Naive thymus-derived CD4-positive, alpha-beta T cell (primary cell): ENCODE measurements at regions of chr4 and their contacts with region 1.

Region 1: DNA sequence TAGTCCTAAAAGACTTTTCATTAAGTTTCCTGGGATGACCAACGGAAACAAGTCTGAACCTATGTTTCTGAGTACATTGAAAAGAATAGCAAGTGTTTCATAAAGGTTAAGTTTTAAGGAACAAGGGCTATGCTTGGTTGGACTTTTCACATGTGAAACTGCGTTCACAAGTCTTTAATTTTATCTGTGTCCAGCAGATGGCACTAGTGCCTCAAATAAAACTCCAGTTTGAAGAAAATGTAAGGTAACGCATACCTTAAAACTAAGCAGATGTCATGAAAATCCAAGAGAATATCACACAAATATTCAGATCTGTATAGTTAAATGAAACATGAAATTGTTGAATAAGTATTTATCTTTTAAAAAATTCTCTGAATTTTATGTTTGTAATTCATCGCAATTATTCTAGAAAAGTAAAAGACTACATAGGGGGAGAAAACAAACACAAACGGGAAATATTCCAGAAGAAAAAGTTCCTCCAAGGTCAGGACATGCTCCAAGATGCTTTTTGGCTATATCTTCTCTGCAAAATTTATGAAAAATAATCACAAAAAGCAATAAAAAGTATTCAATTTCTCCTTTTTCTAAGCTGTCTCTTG is 89.6 kb upstream of the MAD2L1 start:
- DNase-seq: peak in 7 of 9 donors; percentile 22 to 63 (median 57)
- ATAC-seq: peak; percentile 63
- H3K4me3 ChIP-seq: no peak overlapping the region
- H3K4me3 Mint-ChIP-seq: no peak overlapping the region
- H3K27ac ChIP-seq: no peak overlapping the region
- H3K27ac Mint-ChIP-seq: no peak overlapping the region
- H3K4me1 ChIP-seq: no peaks in the 10 kb centered on the region
- H3K4me1 Mint-ChIP-seq: no peaks in the 10 kb centered on the region
- H3K27me3 ChIP-seq: no peaks in the 10 kb centered on the region
- H3K27me3 Mint-ChIP-seq: peaks cover 0 to 4% (median 0%) of the 10 kb centered on the region in 5 donors

Region 2: GRCh38 chr4:119707336-119707735 is 448.9 kb before region 1 on chr4:
- CTCF ChIA-PET with region 1: no interaction called
- POLR2A ChIA-PET with region 1: no interaction called
- intact Hi-C with region 1: no loop called
- DNase-seq: no peak
- ATAC-seq: no peak
- H3K4me3 ChIP-seq: no peak overlapping the region
- H3K4me3 Mint-ChIP-seq: no peak overlapping the region
- H3K27ac ChIP-seq: no peak overlapping the region
- H3K27ac Mint-ChIP-seq: no peak overlapping the region
- H3K4me1 ChIP-seq: no peaks in the 10 kb centered on the region
- H3K4me1 Mint-ChIP-seq: peaks cover 0 to 4% (median 0%) of the 10 kb centered on the region in 7 donors
- H3K27me3 ChIP-seq: no peaks in the 10 kb centered on the region
- H3K27me3 Mint-ChIP-seq: peaks cover 0 to 28% (median 25%) of the 10 kb centered on the region in 5 donors

Region 3: GRCh38 chr4:120718979-120719566 is 562.9 kb after region 1 on chr4:
- CTCF ChIA-PET with region 1: interaction called, 4 read pairs
- POLR2A ChIA-PET with region 1: no interaction called
- intact Hi-C with region 1: loop called in 1 of 2 experiments (anchors 5 kb)
- DNase-seq: peak in 6 of 9 donors; percentile 6 to 40 (median 36)
- ATAC-seq: peak; percentile 82
- H3K4me3 ChIP-seq: no peak overlapping the region
- H3K4me3 Mint-ChIP-seq: no peak overlapping the region
- H3K27ac ChIP-seq: no peak overlapping the region
- H3K27ac Mint-ChIP-seq: no peak overlapping the region
- H3K4me1 ChIP-seq: no peaks in the 10 kb centered on the region
- H3K4me1 Mint-ChIP-seq: peaks cover 0 to 2% (median 0%) of the 10 kb centered on the region in 7 donors
- H3K27me3 ChIP-seq: no peaks in the 10 kb centered on the region
- H3K27me3 Mint-ChIP-seq: peaks cover 0 to 16% (median 0%) of the 10 kb centered on the region in 5 donors

Region 4: DNA sequence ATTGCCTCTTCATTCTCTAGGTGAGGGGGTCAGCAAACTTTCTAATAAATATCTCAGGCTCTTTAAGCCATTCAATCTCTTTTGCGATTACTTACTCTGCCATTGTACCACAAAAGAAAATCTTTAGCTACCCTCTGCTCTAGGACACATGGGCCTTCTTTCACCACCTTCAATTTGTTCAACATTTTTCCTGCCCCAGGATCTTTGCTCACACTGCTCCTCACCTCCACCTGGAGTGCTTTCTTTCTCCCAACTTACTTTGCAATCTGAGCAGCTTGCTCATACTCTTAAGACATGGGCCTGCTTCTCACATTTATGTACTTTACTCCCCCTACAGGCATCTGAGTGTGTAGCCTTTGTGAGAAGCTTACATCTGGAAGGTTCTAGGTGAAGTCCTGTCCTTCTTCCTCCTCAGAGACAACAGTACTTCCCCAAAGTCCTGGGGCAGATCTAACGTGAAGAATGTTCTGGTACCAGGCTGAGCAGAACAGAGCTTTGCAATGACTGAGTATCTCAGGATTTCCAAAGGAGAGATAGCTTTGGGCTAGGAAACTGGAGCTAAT is 821.3 kb after region 1 on chr4:
- CTCF ChIA-PET with region 1: no interaction called
- POLR2A ChIA-PET with region 1: no interaction called
- intact Hi-C with region 1: loop called (anchors 1 to 10 kb)
- DNase-seq: peak in 6 of 9 donors; percentile 6 to 32 (median 26)
- ATAC-seq: peak; percentile 66
- H3K4me3 ChIP-seq: no peak overlapping the region
- H3K4me3 Mint-ChIP-seq: no peak overlapping the region
- H3K27ac ChIP-seq: no peak overlapping the region
- H3K27ac Mint-ChIP-seq: no peak overlapping the region
- H3K4me1 ChIP-seq: no peaks in the 10 kb centered on the region
- H3K4me1 Mint-ChIP-seq: peaks cover 0 to 6% (median 0%) of the 10 kb centered on the region in 7 donors
- H3K27me3 ChIP-seq: no peaks in the 10 kb centered on the region
- H3K27me3 Mint-ChIP-seq: peaks cover 0 to 6% (median 0%) of the 10 kb centered on the region in 5 donors

Region 5: DNA sequence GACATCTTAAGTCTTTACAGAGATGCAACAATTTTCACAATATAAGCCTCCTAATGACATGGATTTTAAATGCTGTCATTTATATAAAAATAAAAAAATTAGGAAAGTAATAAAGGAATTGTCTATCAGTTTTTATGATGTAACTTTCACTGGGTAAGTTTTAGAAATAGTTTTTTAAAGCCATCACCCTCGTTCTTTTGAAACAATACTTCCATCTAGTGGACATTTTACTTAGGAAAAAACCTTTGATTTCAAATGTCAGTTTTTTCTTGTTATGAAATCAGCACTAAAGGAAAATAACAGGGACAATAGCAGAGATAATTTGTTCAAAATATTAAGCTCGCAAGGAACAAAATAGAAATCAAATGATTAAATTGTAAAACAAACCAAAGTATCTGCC is 940.4 kb after region 1 on chr4:
- CTCF ChIA-PET with region 1: interaction called, 7 read pairs
- POLR2A ChIA-PET with region 1: no interaction called
- intact Hi-C with region 1: loop called (anchors 1 kb)
- DNase-seq: peak in 5 of 9 donors; percentile 29 to 52 (median 41)
- ATAC-seq: no peak
- H3K4me3 ChIP-seq: no peak overlapping the region
- H3K4me3 Mint-ChIP-seq: no peak overlapping the region
- H3K27ac ChIP-seq: no peak overlapping the region
- H3K27ac Mint-ChIP-seq: no peak overlapping the region
- H3K4me1 ChIP-seq: no peaks in the 10 kb centered on the region
- H3K4me1 Mint-ChIP-seq: peaks cover 0 to 5% (median 0%) of the 10 kb centered on the region in 7 donors
- H3K27me3 ChIP-seq: no peaks in the 10 kb centered on the region
- H3K27me3 Mint-ChIP-seq: peaks cover 0 to 30% (median 0%) of the 10 kb centered on the region in 5 donors

Region 6: GRCh38 chr4:121112530-121112929 is 956.3 kb after region 1 on chr4:
- CTCF ChIA-PET with region 1: no interaction called
- POLR2A ChIA-PET with region 1: no interaction called
- intact Hi-C with region 1: loop called in 1 of 2 experiments (anchors 1 kb)
- DNase-seq: no peak
- ATAC-seq: no peak
- H3K4me3 ChIP-seq: no peak overlapping the region
- H3K4me3 Mint-ChIP-seq: no peak overlapping the region
- H3K27ac ChIP-seq: no peak overlapping the region
- H3K27ac Mint-ChIP-seq: no peak overlapping the region
- H3K4me1 ChIP-seq: peaks cover 0 to 3% of the 10 kb centered on the region in 2 donors
- H3K4me1 Mint-ChIP-seq: peaks cover 0 to 25% (median 20%) of the 10 kb centered on the region in 7 donors
- H3K27me3 ChIP-seq: no peaks in the 10 kb centered on the region
- H3K27me3 Mint-ChIP-seq: peaks cover 0 to 29% (median 0%) of the 10 kb centered on the region in 5 donors

Region 7: GRCh38 chr4:121307445-121308327 is 1151.5 kb after region 1 on chr4:
- CTCF ChIA-PET with region 1: interaction called, 10 read pairs
- POLR2A ChIA-PET with region 1: no interaction called
- intact Hi-C with region 1: loop called (anchors 1 kb)
- DNase-seq: peak in 7 of 9 donors; percentile 10 to 52 (median 33)
- ATAC-seq: peak; percentile 70
- H3K4me3 ChIP-seq: no peak overlapping the region
- H3K4me3 Mint-ChIP-seq: no peak overlapping the region
- H3K27ac ChIP-seq: no peak overlapping the region
- H3K27ac Mint-ChIP-seq: peak overlapping the region in 1 of 9 donors; percentile 39
- H3K4me1 ChIP-seq: peaks cover 0 to 9% of the 10 kb centered on the region in 2 donors
- H3K4me1 Mint-ChIP-seq: peaks cover 3 to 19% (median 15%) of the 10 kb centered on the region in 7 donors
- H3K27me3 ChIP-seq: no peaks in the 10 kb centered on the region
- H3K27me3 Mint-ChIP-seq: peaks cover 0 to 17% (median 0%) of the 10 kb centered on the region in 5 donors

Region 8: GRCh38 chr4:121726642-121727268 is 1570.5 kb after region 1 on chr4:
- CTCF ChIA-PET with region 1: no interaction called
- POLR2A ChIA-PET with region 1: no interaction called
- intact Hi-C with region 1: loop called in 1 of 2 experiments (anchors 1 kb)
- DNase-seq: peak in 6 of 9 donors; percentile 3 to 50 (median 32)
- ATAC-seq: peak; percentile 93
- H3K4me3 ChIP-seq: no peak overlapping the region
- H3K4me3 Mint-ChIP-seq: no peak overlapping the region
- H3K27ac ChIP-seq: no peak overlapping the region
- H3K27ac Mint-ChIP-seq: no peak overlapping the region
- H3K4me1 ChIP-seq: no peaks in the 10 kb centered on the region
- H3K4me1 Mint-ChIP-seq: peaks cover 0 to 4% (median 0%) of the 10 kb centered on the region in 7 donors
- H3K27me3 ChIP-seq: no peaks in the 10 kb centered on the region
- H3K27me3 Mint-ChIP-seq: peaks cover 0 to 10% (median 5%) of the 10 kb centered on the region in 5 donors